Gastrocnemius medialis (tissue), 4 donors: ENCODE measurements at regions of chrX and their contacts with region 1.

Region 1: DNA sequence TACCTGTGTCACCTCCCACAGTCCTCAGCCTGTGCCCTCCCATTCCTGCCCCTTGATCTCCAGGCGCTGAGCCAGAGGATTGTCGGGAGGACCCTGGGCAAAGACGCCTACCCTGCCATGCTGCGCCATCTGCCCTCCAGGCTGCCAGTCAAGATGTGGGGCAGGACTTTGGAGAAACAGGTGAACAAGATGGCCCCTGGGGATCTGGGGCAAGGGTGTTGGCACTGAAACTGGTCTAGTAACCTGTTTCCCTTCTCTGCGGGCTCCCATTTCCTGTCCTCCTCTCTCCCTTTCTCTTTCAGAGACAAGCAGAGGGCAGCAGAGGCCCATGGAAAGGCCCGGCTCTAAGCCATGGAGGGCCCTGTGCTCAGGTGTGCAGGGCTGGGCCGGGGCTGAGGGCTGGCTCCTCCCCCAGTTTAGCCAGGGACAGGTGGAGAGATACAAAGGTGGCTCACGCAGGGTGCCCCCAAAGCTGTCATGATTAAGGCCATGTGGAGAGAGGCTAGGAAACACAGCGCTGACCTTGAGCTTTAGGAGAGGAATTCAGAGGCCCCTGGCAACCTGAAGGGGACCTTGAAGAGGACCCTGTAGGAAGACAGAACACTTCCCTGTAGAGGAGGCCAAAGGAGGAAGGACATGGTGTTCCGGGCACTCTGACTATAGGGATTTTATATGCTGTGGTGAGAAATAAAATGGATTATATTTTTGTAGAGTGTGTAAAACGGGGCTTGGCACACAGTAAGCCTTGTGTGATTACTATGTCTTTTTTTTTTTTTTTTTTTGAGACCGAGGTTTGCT is at the start of gene GLOD5:
- DNase-seq: no peak
- ATAC-seq: no peak
- H3K4me3 ChIP-seq: no peak within 1 kb of the TSS
- H3K27ac ChIP-seq: no peak within 1 kb of the TSS
- H3K4me1 ChIP-seq: no peaks in the 10 kb centered on the region
- H3K27me3 ChIP-seq: peaks cover 0 to 9% (median 0%) of the 10 kb centered on the region in 3 donors
- CTCF ChIP-seq: no peak
- POLR2A ChIP-seq: no peak
- total RNA-seq, gene GLOD5: not detected

Region 2: GRCh38 chrX:48703642-48704481 is 58.0 kb before region 1 on chrX:
- in situ Hi-C with region 1: loop called in 1 of 4 experiments (anchors 10 kb)
- intact Hi-C with region 1: no loop called
- DNase-seq: no peak
- ATAC-seq: no peak
- H3K4me3 ChIP-seq: no peak overlapping the region
- H3K27ac ChIP-seq: no peak overlapping the region
- H3K4me1 ChIP-seq: no peaks in the 10 kb centered on the region
- H3K27me3 ChIP-seq: no peaks in the 10 kb centered on the region
- CTCF ChIP-seq: no peak
- POLR2A ChIP-seq: no peak